Endothelial cell of umbilical vein (primary cell): ENCODE measurements at regions of chr14 and their contacts with region 1.

Region 1: DNA sequence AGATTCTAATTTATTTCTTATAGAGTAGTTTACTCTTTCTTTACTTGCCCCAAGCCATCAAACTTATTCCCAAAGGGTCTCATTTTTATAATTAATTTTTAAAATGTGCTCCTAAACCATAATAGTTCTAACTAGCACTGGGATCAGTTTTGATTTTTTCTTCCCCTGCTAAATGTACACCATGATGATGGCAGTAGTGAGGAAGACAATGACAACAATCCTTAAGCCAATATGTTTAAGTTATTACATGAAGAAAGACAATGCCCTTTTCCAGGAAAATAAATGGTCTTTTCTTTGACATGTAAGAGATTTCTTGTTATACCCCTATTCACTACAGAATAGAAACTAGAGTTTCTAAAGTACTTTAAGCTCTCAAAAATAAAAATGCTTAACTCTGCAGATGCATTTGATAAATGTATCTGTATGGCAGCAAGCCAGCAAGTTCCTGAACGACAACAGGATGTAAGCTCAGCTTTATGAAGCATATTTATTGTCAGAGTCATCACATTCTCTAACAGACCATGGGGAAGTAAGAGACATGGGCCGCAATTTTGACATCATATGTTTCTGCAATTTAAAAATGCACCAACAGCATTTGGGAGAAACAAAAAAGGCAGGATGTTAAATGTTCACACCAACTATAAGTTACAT is 36.0 kb upstream of the SNX6 start:
- DNase-seq: peak; percentile 89
- H3K4me3 ChIP-seq: no peak overlapping the region
- H3K27ac ChIP-seq: peak overlapping the region; percentile 87
- H3K4me1 ChIP-seq: peaks cover 18% of the 10 kb centered on the region
- H3K27me3 ChIP-seq: no peaks in the 10 kb centered on the region
- CTCF ChIP-seq: no peak
- POLR2A ChIP-seq: no peak

Region 2: DNA sequence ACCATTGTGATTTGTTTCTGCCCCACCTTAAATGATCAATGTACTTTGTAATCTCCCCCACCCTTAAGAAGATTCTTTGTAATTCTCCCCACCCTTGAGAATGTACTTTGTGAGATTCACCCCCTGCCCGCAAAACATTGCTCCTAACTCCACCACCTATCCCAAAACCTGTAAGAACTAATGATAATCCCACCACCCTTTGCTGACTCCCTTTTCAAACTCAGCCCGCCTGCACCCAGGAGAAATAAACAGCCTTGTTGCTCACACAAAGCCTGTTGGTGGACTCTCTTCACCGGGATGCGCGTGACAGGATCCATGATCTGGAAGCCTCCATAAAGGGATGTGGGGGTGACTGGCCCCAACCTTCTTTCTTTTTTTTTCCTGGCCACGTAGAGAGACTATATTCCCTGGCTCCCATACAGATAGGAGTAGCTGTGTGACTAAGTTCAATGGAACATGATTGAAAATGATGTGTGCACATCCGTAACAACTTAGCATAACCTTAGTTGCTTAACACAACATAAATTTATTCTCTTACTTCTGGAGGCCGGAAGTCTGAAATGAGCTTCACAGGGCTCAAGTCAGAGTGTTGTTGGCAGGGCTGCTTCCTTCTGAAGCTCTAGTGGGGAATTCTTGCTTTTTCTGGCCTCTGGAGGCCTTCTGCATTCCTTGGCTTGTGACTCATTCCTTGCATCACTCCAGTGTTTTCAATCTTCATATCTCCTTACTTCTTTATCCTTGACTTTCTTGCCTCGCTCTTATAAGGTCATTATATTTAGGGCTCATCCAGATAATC is 15.3 kb before region 1 on chr14:
- CTCF ChIA-PET with region 1: interaction called, 9 read pairs
- POLR2A ChIA-PET with region 1: interaction called, 3 read pairs
- dilution Hi-C with region 1: no loop called
- intact Hi-C with region 1: loop called (anchors 1 kb)
- DNase-seq: peak; percentile 89
- H3K4me3 ChIP-seq: no peak overlapping the region
- H3K27ac ChIP-seq: peak overlapping the region; percentile 77
- H3K4me1 ChIP-seq: peaks cover 21% of the 10 kb centered on the region
- H3K27me3 ChIP-seq: no peaks in the 10 kb centered on the region
- CTCF ChIP-seq: no peak
- POLR2A ChIP-seq: peak; percentile 63

Region 3: DNA sequence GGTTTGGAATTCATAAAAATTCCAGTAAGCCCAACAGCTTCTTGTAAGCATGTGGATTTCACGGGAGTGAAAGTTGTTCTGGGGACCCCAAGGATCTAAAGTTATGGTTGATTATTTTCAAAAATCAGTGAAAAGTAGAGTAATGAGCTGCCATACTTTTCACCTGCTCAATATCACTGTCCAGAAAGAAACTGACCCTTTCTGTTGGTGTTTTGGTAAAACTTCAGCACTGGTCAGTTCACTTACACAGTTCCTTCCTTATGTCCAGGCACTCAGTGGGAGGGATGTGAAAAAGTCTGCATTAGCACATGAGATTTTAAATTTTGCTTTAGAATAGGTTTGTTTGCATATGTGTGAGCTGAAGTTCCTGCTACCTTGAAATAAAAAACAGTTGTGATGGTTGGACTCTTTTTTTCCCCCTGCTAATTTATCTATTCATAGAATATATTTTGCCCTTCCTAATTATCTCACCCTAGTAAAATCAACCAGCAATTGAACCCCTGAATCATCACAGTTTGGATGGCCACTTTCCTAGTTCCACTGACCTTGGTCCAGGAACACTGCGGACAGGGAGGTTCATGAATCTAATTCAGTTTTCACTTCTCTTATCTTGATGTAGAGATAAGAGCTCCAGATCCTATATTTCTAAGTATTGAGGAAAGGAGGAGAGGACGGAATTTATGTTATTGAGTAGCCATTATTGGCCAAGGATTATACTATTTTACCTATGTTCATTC is 22.7 kb after region 1 on chr14:
- CTCF ChIA-PET with region 1: no interaction called
- POLR2A ChIA-PET with region 1: no interaction called
- dilution Hi-C with region 1: no loop called
- intact Hi-C with region 1: no loop called
- DNase-seq: no peak
- H3K4me3 ChIP-seq: no peak overlapping the region
- H3K27ac ChIP-seq: no peak overlapping the region
- H3K4me1 ChIP-seq: no peaks in the 10 kb centered on the region
- H3K27me3 ChIP-seq: no peaks in the 10 kb centered on the region
- CTCF ChIP-seq: no peak
- POLR2A ChIP-seq: no peak